GM12878 (cell line): ENCODE measurements at regions of chr6 and their contacts with region 1.

Region 1: DNA sequence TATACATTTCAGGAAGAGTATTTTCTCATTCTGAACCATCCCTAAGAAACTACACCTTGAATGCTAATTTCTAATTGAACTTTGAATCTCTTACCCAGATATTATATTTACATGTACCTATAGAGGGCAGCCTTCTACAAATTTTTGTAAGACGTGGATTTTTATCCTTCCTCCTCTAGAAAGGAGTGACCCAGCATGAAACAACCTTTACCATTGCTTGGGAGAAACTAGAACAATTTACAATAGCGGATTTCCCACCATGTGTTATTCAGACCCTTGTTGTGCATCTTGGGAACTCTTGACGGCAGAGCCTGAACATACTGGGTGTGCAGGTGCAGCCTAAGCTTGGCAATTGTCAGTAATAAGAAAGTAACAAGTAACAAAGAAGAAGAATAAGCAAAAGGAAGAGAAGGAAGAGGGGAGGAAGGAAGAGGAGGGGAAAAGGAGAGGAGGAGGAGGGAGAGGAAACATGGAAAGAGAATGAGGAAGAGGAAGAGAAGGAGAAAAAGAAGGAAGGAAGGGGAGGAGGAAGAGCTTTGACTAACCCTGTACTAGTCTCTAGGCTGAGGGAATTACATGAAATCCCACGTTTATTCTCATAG is 10.8 kb upstream of the TAAR1 start:
- DNase-seq: no peak
- ATAC-seq: peak; percentile 86
- H3K4me3 ChIP-seq: no peak overlapping the region
- H3K27ac ChIP-seq: no peak overlapping the region
- H3K4me1 ChIP-seq: no peaks in the 10 kb centered on the region
- H3K27me3 ChIP-seq: no peaks in the 10 kb centered on the region
- CTCF ChIP-seq: peak; percentile 38 to 61 (median 48); a peak in 4 of 6 replicates
- EP300 ChIP-seq: no peak
- POLR2A ChIP-seq: no peak
- RAD21 ChIP-seq: peak; percentile 66

Region 2: GRCh38 chr6:132530293-132530974 is 139.4 kb before region 1 on chr6:
- CTCF ChIA-PET with region 1: interaction called, 8 read pairs
- POLR2A ChIA-PET with region 1: no interaction called
- RAD21 ChIA-PET with region 1: interaction called, 3 read pairs
- SMC1A ChIA-PET with region 1: interaction called, 4 read pairs
- in situ Hi-C with region 1: no loop called
- intact Hi-C with region 1: loop called (anchors 2 kb)
- DNase-seq: peak; percentile 21
- ATAC-seq: peak; percentile 96
- H3K4me3 ChIP-seq: no peak overlapping the region
- H3K27ac ChIP-seq: no peak overlapping the region
- H3K4me1 ChIP-seq: no peaks in the 10 kb centered on the region
- H3K27me3 ChIP-seq: no peaks in the 10 kb centered on the region; a peak in 1 of 4 replicates
- CTCF ChIP-seq: peak; percentile 57 to 74 (median 60); a peak in 5 of 6 replicates
- EP300 ChIP-seq: no peak
- POLR2A ChIP-seq: no peak
- RAD21 ChIP-seq: peak; percentile 91

Region 3: DNA sequence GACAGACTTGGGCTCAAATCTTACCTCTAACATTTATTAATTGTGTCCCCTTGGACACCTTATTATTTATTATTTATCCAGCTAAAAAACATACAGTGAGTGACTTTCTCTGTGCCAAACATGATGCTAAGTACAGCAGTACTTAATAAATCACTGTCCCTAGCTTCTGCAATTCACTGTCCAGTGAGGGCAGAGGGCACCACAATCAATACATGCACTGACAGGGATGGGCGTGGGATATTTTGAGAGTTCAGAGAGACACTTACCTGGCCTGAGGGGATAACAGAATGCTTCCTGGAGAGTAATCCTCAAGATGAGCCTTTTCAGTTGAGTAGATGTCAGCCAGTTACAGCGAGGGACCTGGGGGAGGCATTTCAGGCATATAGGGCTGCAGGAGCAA is 36.4 kb before region 1 on chr6:
- CTCF ChIA-PET with region 1: no interaction called
- POLR2A ChIA-PET with region 1: no interaction called
- RAD21 ChIA-PET with region 1: no interaction called
- SMC1A ChIA-PET with region 1: no interaction called
- in situ Hi-C with region 1: no loop called
- intact Hi-C with region 1: no loop called
- DNase-seq: no peak
- ATAC-seq: no peak
- H3K4me3 ChIP-seq: no peak overlapping the region
- H3K27ac ChIP-seq: no peak overlapping the region
- H3K4me1 ChIP-seq: no peaks in the 10 kb centered on the region
- H3K27me3 ChIP-seq: no peaks in the 10 kb centered on the region; a peak in 1 of 4 replicates
- CTCF ChIP-seq: no peak
- EP300 ChIP-seq: no peak
- POLR2A ChIP-seq: no peak
- RAD21 ChIP-seq: no peak

Region 4: DNA sequence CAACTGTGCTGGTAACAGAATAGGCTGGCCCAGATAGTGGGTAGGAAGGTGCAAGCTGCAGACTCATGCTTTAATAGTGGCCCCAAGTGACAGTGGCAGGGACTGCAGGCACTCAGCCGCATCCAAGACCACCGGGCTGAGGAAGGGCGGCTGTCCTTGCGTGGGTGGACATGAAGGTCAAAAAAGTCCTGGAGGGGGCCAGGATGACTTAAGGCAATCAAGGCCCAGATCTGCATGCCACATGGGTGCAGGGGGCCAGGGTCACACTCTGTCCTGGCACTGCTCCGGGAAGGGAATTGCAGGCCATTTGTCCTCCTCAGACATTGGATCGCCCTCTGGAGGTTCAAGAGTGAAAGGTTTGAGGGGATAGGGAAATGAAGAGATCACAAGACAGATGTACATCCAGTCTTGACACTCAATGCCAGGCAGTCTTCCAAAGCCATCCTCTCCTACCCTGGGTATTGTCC is 98.3 kb after region 1 on chr6:
- CTCF ChIA-PET with region 1: interaction called, 141 read pairs
- POLR2A ChIA-PET with region 1: interaction called, 4 read pairs
- RAD21 ChIA-PET with region 1: interaction called, 31 read pairs
- SMC1A ChIA-PET with region 1: interaction called, 100 read pairs
- in situ Hi-C with region 1: loop called (anchors 5 kb)
- intact Hi-C with region 1: loop called (anchors 1 kb)
- DNase-seq: no peak
- ATAC-seq: peak; percentile 94
- H3K4me3 ChIP-seq: no peak overlapping the region
- H3K27ac ChIP-seq: no peak overlapping the region
- H3K4me1 ChIP-seq: no peaks in the 10 kb centered on the region
- H3K27me3 ChIP-seq: no peaks in the 10 kb centered on the region
- CTCF ChIP-seq: peak; percentile 62 to 70 (median 66)
- EP300 ChIP-seq: no peak
- POLR2A ChIP-seq: no peak
- RAD21 ChIP-seq: peak; percentile 72

Region 5: GRCh38 chr6:132798869-132799538 is 129.2 kb after region 1 on chr6:
- CTCF ChIA-PET with region 1: interaction called, 31 read pairs
- POLR2A ChIA-PET with region 1: interaction called, 3 read pairs
- RAD21 ChIA-PET with region 1: interaction called, 23 read pairs
- SMC1A ChIA-PET with region 1: interaction called, 28 read pairs
- in situ Hi-C with region 1: no loop called
- intact Hi-C with region 1: loop called (anchors 1 kb)
- DNase-seq: peak; percentile 63
- ATAC-seq: peak; percentile 94
- H3K4me3 ChIP-seq: peak overlapping the region; percentile 82
- H3K27ac ChIP-seq: peak overlapping the region; percentile 87
- H3K4me1 ChIP-seq: peaks cover 3% of the 10 kb centered on the region; the same call in 1 of the 2 replicates
- H3K27me3 ChIP-seq: no peaks in the 10 kb centered on the region
- CTCF ChIP-seq: peak; percentile 78 to 90 (median 85)
- EP300 ChIP-seq: no peak
- POLR2A ChIP-seq: no peak
- RAD21 ChIP-seq: peak; percentile 55

Region 6: DNA sequence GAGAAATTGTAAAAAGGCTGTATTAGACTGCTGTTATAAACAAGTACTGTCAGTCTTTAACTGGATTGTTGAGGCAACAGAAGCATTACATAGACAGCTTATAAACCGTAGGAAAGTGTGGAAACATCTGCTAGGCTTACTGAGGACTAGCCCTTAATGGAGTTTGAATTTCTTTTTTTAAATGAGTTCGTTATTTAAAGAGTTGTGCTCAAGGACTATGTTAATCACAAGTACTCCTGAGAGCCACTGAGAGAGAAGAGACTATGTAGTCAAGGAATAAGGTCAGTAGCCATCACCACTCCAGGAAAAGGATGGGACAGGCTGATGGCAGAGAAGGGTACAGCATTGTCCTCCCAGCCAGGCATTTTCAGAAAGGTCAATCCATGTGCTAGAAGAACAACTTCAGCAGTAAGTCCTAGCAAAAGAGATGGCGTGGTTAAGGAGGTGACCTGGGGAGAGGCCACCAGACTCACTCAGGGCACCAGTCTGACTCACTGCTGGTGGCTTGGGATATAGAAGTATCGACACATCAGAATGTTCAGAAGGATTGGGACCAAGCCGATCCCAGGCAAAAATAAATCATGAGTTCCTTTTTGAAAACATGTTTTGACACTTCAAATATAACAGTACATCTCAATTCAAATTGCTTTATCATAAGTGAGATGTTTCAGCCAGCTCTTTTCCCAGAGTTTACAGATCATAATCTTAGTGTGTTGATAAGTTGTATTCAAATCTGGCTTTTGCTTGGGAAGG is 151.0 kb after region 1 on chr6:
- CTCF ChIA-PET with region 1: interaction called, 25 read pairs
- POLR2A ChIA-PET with region 1: no interaction called
- RAD21 ChIA-PET with region 1: interaction called, 4 read pairs
- SMC1A ChIA-PET with region 1: interaction called, 4 read pairs
- in situ Hi-C with region 1: no loop called
- intact Hi-C with region 1: no loop called
- DNase-seq: no peak
- ATAC-seq: peak; percentile 26
- H3K4me3 ChIP-seq: no peak overlapping the region
- H3K27ac ChIP-seq: no peak overlapping the region
- H3K4me1 ChIP-seq: no peaks in the 10 kb centered on the region
- H3K27me3 ChIP-seq: no peaks in the 10 kb centered on the region
- CTCF ChIP-seq: no peak
- EP300 ChIP-seq: no peak
- POLR2A ChIP-seq: peak; percentile 65
- RAD21 ChIP-seq: no peak